Left colon (tissue), 2 donors: ENCODE measurements at regions of chr4 and their contacts with region 1.

Region 1: GRCh38 chr4:162497564-162498167 is 333.9 kb upstream of the FSTL5 start:
- DNase-seq: no peak
- ATAC-seq: peak; percentile 75

Region 2: DNA sequence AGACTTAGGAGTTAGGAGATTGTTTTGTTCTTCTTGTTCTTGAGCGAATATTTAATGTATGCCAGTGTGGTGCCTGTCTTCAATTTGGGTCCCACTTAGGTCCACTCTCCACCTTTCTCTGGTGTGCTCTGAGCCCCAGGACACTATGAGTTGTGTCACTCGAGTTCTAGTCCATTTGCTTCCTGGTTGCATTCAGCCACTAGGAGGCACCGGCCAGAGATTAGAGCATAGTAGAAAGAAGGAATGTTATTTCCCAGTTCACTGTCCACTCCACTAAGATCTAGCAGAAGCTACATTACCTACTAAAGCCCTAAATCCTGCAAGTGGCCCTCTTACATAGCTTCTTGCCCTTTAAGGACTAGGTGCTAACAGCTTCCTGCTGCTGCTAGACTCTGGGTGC is 342.2 kb after region 1 on chr4:
- intact Hi-C with region 1: no loop called
- DNase-seq: no peak
- ATAC-seq: no peak

Region 3: DNA sequence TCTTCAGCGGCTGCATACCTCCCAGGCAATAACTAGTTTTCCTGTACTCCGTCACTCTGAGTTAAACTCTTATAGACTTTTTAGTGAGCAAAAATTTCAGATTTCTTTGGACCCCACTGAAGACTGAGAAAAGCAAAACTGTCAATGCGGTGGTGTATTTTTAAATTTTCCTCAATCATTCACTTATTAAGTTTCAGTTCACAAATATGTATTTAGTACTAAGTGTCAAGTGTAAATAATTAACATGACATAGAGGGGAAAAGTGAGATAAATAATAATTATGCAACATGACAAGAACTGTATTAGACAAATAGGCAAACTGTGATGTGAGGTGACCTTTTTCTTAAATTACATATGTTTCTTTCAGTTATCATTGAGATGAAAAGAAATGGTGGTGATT is 544.6 kb after region 1 on chr4:
- intact Hi-C with region 1: loop called in 1 of 2 experiments (anchors 10 kb)
- DNase-seq: no peak
- ATAC-seq: no peak

Region 4: DNA sequence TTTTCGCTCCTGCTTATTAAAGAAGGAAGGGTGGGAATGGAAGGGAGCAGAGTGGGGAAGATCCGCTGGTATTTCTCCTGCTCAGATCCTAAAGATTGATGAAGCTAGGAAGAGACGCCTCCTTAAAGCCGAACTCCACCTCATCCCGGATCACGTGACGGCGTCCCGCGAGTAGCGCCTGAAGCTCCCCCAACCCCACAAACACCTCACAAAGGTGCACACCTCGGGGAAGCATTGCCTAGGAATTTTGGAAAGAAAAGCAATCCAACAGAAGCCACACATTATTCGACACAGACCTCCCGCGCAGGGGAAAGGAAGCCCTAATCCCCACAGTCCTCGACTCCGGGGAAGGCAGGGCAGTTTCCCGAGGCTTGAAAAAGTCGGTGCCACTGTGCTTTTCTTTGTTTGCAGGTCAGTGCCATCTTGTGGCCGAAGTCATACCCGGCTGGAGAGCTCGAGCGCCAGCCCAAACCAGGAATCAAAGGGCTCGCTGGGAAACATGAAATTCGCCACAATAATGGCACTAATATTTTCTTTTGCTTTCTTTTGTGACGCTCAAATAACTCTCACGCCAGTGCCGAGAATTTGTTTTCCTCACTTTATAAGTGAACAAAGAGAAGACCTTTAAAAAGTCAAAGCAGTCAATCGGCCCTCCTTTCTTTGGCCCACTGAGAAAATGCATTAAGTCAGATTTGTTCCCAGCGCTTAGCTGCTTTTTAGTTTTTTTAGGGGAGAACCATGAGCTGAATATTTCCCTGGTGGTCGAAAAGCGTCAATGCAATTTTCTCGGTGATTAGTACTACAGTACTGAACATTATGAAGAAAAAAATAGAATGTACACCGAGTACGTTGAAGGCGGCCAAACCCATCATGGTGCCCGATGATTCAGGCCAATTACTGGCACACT is 835.1 kb after region 1 on chr4 and contains the start of gene NPY1R:
- intact Hi-C with region 1: loop called in 1 of 2 experiments (anchors 5 kb)
- DNase-seq: peak; percentile 70 to 80
- ATAC-seq: peak; percentile 90
- total RNA-seq, gene NPY1R: 4.9 to 6.6 TPM

Region 5: DNA sequence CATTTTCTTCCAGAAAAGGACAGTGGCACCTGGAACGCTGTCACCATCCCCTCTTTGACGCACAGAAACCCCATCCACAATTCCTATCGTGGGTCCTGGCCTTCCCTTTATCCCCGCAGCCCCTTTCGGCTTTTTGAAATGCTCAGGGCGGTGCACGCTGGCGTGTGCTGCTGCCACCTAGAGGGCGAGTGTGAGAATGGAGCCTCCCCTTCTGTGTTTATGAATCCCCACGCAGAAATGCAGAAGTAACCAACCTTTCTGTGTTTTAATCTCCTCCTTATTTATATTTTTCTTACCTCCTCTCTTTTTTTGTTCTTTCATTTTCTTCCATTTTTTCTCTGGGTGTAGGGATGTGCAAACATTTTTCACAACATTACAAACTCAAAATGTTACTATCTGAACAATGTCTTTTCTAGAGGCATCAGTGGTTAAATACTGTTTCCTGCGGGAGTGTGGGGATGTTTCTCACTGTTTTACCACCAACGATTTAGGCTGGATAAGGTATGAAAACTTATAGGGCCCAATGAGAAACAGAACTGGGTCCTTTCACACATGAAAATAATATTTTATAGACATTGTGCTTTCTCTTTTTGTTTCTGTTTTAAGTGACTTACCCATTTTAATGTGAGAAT is 1046.9 kb after region 1 on chr4:
- intact Hi-C with region 1: loop called in 1 of 2 experiments (anchors 10 kb)
- DNase-seq: peak in 1 of 2 donors; percentile 70
- ATAC-seq: peak; percentile 79